AG04449 (cell line): ENCODE measurements at regions of chr17 and their contacts with region 1.

Region 1: DNA sequence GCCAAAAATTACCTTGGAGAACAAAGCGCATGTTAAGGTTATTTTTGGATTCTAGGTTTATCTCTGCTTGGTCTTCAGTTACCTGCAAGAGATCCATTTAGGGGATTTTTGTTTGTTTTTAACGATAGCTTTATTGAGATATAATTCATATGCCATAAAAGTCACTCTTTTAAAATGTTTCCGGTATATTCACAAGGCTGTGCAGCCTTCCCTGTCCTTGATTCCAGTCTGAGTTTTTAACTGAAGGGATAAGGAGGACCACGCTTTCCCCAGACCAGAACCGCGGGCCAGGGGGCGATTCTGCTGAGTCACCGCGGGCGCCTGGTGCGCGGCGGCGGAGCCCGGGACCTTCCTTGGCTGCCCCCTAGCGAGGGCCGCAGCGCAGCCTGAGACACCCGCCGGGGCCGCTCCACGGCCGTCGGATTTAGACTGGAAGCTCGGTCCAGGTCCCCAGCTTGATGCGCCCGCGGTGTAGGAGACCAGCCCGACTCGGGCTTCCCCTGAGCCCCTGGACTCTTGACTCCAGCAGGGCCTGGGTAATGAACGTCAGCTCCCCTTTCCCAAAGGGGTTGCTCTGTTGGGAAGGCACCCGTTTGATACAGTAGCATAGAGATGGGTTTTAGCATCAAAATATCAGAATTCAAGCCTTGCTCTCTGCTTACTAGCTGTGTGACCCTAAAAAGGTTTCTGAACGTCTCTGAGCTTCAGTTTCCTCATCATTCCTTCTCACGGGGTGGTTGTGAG is 50.0 kb upstream of the STH start:
- DNase-seq: no peak
- H3K4me3 ChIP-seq: no peak overlapping the region
- CTCF ChIP-seq: peak; percentile 89

Region 2: GRCh38 chr17:45782889-45783592 is 166.0 kb before region 1 on chr17:
- CTCF ChIA-PET with region 1: no interaction called
- POLR2A ChIA-PET with region 1: no interaction called
- DNase-seq: no peak
- H3K4me3 ChIP-seq: no peak overlapping the region
- CTCF ChIP-seq: peak; percentile 37

Region 3: GRCh38 chr17:45894022-45894784 is 54.9 kb before region 1 on chr17 and contains the start of gene MAPT:
- CTCF ChIA-PET with region 1: interaction called, 19 read pairs
- POLR2A ChIA-PET with region 1: no interaction called
- DNase-seq: peak; percentile 24
- H3K4me3 ChIP-seq: peak within 1 kb of the TSS; percentile 70
- CTCF ChIP-seq: peak; percentile 93

Region 4: DNA sequence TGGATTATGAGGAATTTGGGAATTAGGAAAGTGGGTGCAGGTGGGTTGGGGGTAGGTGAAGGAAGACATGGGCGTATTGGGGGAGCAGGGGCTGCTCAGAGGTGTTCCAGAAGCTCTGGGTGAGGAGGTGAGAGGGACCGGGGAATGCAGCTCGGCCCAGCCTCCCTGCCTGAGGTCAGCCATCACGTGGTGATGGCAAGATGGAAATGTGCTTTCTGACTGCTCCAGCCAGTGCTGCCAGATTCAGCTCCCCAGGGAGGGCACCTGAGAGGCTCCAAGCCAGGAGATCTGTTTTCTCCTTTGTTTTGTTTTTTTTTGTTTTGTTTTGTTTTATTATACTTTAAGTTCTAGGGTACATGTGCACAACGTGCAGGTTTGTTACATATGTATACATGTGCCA is 14.8 kb after region 1 on chr17:
- CTCF ChIA-PET with region 1: interaction called, 20 read pairs
- POLR2A ChIA-PET with region 1: no interaction called
- DNase-seq: no peak
- H3K4me3 ChIP-seq: no peak overlapping the region
- CTCF ChIP-seq: no peak